Mammary epithelial cell (primary cell): ENCODE measurements at regions of chr14 and their contacts with region 1.

Region 1: GRCh38 chr14:95609387-95609990 is 74.6 kb downstream of the GLRX5 start:
- DNase-seq: peak; percentile 17
- H3K4me3 ChIP-seq: no peak overlapping the region
- H3K27ac ChIP-seq: no peak overlapping the region
- H3K4me1 ChIP-seq: no peaks in the 10 kb centered on the region
- H3K27me3 ChIP-seq: peaks cover 4% of the 10 kb centered on the region
- CTCF ChIP-seq: peak; percentile 41 to 65

Region 2: DNA sequence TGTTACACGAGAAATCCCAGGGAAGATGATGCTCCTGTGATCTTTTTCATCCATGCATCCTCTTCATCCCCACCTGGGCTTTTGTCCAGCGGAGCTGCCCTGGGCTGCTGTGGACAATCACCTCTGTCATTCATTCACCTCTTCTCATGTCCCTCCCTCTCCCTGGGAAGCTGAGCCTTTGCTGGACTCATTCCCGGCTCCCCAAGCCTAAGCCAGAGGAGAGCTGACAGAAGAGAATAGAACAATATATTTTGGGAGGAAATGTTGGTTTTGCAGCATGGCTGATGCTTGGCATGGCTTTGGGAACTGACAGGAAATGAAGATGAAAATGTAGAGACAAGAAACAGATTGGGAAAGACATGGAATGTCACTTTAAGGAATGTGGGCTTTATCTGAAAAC is 629.6 kb before region 1 on chr14:
- CTCF ChIA-PET with region 1: no interaction called
- dilution Hi-C with region 1: no loop called
- in situ Hi-C with region 1: no loop called
- intact Hi-C with region 1: no loop called
- DNase-seq: no peak
- H3K4me3 ChIP-seq: no peak overlapping the region
- H3K27ac ChIP-seq: no peak overlapping the region
- H3K4me1 ChIP-seq: no peaks in the 10 kb centered on the region
- H3K27me3 ChIP-seq: no peaks in the 10 kb centered on the region
- CTCF ChIP-seq: no peak

Region 3: DNA sequence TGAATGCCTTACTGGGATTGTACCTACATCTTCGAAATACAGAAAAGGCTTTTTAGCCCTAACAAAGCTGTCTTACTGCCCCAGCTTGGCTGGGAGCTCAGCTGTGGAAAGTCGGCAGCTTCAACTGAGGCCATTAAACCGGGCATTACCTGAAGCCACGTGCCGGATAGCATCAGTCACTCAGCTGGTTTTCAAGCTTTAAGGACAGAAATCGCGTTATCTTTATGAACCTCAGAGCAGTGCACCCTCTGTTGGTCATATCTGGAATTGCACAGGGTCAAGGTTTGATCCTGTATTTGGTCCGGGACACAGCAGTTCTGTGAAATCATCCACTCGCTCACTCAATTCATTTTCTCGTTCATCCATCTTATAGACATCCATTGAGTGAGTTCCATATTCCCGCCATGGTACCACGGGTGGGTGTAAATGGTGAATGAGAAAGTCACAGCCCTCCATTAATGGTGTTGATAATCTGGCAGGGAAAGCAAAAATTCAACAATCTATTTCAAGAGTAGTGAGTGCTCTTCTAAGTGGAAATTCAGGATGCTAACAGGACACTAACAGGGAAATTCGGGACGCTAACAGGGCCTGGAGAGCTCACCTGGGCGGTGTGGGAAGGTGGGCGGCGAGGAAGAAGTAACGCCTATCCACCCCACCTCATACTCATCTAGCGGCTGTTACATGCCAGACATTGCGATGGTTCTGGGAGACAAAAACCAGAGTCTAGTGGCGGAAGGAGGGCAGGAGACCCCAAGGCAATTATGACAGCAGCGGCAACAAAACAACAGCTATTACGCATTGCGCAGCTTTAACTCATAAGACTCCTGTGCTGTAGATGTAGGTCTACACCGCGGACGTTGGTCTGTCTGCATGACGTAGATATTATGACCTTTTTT is 165.0 kb after region 1 on chr14:
- CTCF ChIA-PET with region 1: no interaction called
- dilution Hi-C with region 1: no loop called
- in situ Hi-C with region 1: no loop called
- intact Hi-C with region 1: loop called (anchors 1 kb)
- DNase-seq: peak; percentile 23
- H3K4me3 ChIP-seq: no peak overlapping the region
- H3K27ac ChIP-seq: no peak overlapping the region
- H3K4me1 ChIP-seq: no peaks in the 10 kb centered on the region
- H3K27me3 ChIP-seq: peaks cover 2% of the 10 kb centered on the region
- CTCF ChIP-seq: peak; percentile 82 to 85